ENCODE measurements at regions of chr5 and their contacts with region 1.

Region 1: DNA sequence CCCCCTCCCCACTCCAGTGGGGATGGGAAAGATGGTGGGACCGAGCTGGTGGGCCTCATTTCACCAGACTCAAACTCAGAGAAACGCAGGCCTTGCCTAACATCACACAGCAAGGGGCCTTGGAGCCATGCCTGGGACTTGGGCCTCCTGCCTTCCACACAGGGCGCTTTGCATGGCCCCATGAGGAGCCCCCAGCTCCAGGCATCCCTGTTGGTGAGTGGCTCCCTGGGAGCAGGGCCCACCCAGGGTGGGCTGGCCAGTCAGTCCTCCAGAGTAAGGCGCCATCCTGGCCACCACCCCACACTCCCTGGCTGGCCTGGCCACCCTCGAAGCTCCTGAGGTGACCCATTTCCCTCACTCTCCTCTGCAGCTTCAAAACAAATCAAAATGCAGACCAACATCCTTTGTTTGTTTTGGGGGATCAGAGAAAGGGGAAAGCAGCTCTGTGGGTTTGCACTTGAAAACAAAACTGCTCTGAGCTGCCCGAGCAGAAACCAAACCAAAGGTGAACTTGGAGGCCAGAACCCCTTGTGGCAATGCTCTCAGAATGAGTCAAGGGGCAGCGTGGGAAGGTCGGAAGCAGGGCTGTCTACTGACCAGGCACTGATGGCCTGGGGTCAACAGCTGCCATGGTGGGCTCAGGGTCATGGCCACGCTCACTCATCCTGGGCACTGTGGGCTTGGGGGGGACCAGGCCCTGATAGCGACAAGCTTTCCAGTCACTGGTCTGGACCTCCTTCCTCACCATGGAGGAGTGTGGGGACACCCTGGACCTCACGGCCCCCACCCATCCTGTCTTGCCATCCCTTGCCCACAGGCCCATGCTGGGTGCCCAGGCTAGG is 37.0 kb upstream of the VDAC1 start:
- DNase-seq: peak in 1 of 14 experiments; percentile 10
- ATAC-seq: no peak
- H3K4me3 ChIP-seq: no peak overlapping the region
- H3K4me3 Mint-ChIP-seq: peak overlapping the region; percentile 30
- H3K27ac ChIP-seq: peak overlapping the region in 1 of 2 donors; percentile 36
- H3K27ac Mint-ChIP-seq: peak overlapping the region; percentile 47
- H3K4me1 ChIP-seq: peaks cover 60% of the 10 kb centered on the region
- H3K4me1 Mint-ChIP-seq: peaks cover 78% of the 10 kb centered on the region
- H3K27me3 ChIP-seq: no peaks in the 10 kb centered on the region
- H3K27me3 Mint-ChIP-seq: no peaks in the 10 kb centered on the region
- CTCF ChIP-seq: no peak

Region 2: DNA sequence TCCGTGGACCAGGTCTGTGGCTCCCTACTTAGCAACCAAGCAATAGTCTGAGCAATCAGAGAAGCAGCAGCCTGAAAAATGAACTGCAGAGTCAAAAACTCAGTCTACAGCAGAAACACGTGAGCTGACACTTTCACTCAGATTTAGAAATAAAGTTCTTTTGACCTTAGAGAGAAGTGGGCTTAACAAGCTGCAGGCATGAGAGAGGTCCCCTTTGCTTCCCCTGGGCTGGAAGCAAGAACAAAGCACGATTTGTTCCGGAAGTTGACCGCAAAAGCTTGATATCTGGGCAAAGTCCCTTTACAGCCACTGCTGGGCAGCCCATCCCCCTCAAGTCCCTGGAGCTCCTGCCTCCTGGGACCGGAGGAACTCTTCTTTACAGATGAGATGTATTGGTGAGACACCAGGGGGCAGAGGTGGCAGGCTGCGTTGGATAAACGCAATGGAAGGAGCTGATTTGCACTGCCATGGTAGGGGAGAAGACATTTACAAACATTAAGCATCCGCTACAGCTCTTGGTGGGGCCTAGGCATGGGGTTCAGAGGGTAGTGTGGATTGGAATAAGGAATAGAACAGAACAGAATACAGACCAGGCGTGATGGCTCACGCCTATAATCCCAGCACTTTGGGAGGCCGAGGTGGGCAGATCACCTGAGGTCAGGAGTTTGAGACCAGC is 1234.5 kb before region 1 on chr5:
- CTCF ChIA-PET with region 1: no interaction called
- POLR2A ChIA-PET with region 1: no interaction called
- intact Hi-C with region 1: no loop called
- DNase-seq: no peak
- ATAC-seq: no peak
- H3K4me3 ChIP-seq: no peak overlapping the region
- H3K4me3 Mint-ChIP-seq: no peak overlapping the region
- H3K27ac ChIP-seq: no peak overlapping the region
- H3K27ac Mint-ChIP-seq: no peak overlapping the region
- H3K4me1 ChIP-seq: peaks cover 3% of the 10 kb centered on the region
- H3K4me1 Mint-ChIP-seq: peaks cover 8% of the 10 kb centered on the region
- H3K27me3 ChIP-seq: peaks cover 18 to 35% of the 10 kb centered on the region in 2 experiments
- H3K27me3 Mint-ChIP-seq: peaks cover 89% of the 10 kb centered on the region
- CTCF ChIP-seq: no peak

Region 3: DNA sequence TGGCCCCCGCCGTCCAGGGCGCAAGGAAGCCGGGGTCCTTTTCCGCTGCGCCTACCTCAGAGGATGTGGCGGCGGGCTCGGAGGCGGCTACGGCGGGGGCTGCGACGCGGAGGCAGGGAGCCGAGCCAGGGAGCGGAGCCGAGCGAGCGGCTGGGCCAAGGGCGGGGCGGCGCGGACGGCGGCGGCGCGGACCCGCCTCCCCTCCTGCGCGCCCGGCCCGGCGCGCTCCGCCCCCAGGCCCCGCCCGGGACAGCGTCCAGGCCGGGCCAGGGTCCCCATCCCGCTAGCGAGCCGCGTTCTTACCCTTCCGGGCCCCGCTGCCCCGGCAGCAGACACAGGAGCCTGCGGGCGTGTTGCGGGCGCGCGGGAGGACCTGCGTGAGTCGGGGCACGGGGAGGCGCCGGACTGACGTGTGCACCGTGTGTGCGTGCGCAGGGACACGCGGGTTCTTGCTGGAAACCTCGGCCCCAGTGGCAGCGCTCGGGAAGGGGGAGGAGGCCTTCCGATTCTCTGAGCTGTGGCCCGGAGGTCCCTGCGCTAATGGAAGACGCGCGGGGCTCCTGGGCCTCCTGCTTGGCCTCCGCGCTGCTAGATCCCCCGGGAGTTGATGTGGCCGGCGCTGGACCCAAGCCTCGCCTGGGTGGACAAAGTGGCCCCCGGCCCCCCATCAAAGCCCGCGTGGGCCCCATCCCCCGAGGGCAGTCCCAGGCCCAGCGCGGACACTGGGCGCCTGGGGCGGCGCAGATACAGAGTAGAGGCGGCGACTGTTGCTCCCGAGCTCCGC is 37.0 kb before region 1 on chr5 and contains the start of gene VDAC1:
- CTCF ChIA-PET with region 1: interaction called, 11 read pairs
- POLR2A ChIA-PET with region 1: interaction called, 7 read pairs
- intact Hi-C with region 1: no loop called
- DNase-seq: peak; percentile 69 to 97 (median 80)
- ATAC-seq: peak; percentile 82
- H3K4me3 ChIP-seq: peak within 1 kb of the TSS; percentile 85
- H3K4me3 Mint-ChIP-seq: peak within 1 kb of the TSS; percentile 99
- H3K27ac ChIP-seq: peak within 1 kb of the TSS; percentile 77 to 91
- H3K27ac Mint-ChIP-seq: peak within 1 kb of the TSS; percentile 97
- H3K4me1 ChIP-seq: peaks cover 54% of the 10 kb centered on the region
- H3K4me1 Mint-ChIP-seq: peaks cover 48% of the 10 kb centered on the region
- H3K27me3 ChIP-seq: no peaks in the 10 kb centered on the region
- H3K27me3 Mint-ChIP-seq: no peaks in the 10 kb centered on the region
- CTCF ChIP-seq: no peak
- total RNA-seq, gene VDAC1: 46.8 to 50.9 TPM

Region 4: DNA sequence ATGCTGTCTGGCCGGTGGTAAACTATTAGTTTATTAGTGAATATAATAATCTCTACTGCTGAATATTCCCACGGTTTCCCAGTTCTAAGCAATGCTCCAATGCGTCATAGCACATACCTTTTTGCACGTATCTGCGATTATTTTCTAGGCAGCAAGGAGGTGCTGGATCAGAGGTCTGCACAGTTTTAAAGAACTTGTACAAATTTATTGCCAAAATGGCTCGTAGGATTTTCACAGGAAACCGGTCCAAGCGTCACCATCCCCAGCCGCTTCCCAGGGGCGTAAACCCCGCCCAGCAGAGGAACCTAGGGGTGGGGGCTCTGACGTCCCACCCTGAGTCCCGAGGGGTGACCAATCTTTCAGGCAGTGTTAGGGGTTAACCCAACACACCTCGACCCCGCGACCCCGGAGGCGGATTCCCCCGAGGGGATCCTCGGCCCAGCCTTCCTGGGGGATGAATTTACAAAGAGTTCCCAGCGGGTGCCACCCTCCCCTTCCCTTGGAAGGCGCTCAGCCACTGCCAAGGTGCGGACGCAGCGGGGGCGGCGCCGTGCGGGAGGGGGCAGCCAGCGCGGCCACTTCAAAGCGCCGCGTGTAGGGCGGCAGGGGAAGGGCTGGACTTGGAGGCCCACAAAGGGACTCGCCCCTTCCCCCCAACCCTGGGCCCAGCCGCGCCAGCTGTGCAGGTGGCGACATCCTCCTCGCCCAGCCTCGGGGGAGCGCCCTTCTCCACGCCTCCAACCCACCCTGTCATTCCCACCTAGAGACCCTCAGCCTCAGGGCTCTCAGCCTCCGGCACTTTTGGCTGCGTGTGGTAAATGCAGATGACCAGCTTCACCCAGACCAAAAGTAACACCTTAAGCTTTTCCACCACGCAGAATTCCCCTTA is 29.2 kb after region 1 on chr5:
- CTCF ChIA-PET with region 1: interaction called, 31 read pairs
- POLR2A ChIA-PET with region 1: interaction called, 18 read pairs
- intact Hi-C with region 1: loop called in 1 of 2 experiments (anchors 5 kb)
- DNase-seq: peak in 10 of 14 experiments; percentile 18 to 63 (median 46)
- ATAC-seq: peak; percentile 60
- H3K4me3 ChIP-seq: peak overlapping the region; percentile 61
- H3K4me3 Mint-ChIP-seq: peak overlapping the region; percentile 89
- H3K27ac ChIP-seq: peak overlapping the region in 1 of 2 donors; percentile 60
- H3K27ac Mint-ChIP-seq: peak overlapping the region; percentile 81
- H3K4me1 ChIP-seq: peaks cover 64% of the 10 kb centered on the region
- H3K4me1 Mint-ChIP-seq: peaks cover 74% of the 10 kb centered on the region
- H3K27me3 ChIP-seq: no peaks in the 10 kb centered on the region
- H3K27me3 Mint-ChIP-seq: no peaks in the 10 kb centered on the region
- CTCF ChIP-seq: peak; percentile 30

Region 5: GRCh38 chr5:134101686-134102439 is 60.1 kb after region 1 on chr5:
- CTCF ChIA-PET with region 1: interaction called, 66 read pairs
- POLR2A ChIA-PET with region 1: interaction called, 3 read pairs
- intact Hi-C with region 1: loop called in 1 of 2 experiments (anchors 2 kb)
- DNase-seq: peak; percentile 59 to 84 (median 73)
- ATAC-seq: peak; percentile 28
- H3K4me3 ChIP-seq: no peak overlapping the region
- H3K4me3 Mint-ChIP-seq: no peak overlapping the region
- H3K27ac ChIP-seq: peak overlapping the region; percentile 56 to 97
- H3K27ac Mint-ChIP-seq: peak overlapping the region; percentile 94
- H3K4me1 ChIP-seq: peaks cover 98% of the 10 kb centered on the region
- H3K4me1 Mint-ChIP-seq: peaks cover 94% of the 10 kb centered on the region
- H3K27me3 ChIP-seq: no peaks in the 10 kb centered on the region
- H3K27me3 Mint-ChIP-seq: no peaks in the 10 kb centered on the region
- CTCF ChIP-seq: peak; percentile 92

Region 6: GRCh38 chr5:134125039-134126015 is 83.5 kb after region 1 on chr5:
- CTCF ChIA-PET with region 1: interaction called, 51 read pairs
- POLR2A ChIA-PET with region 1: interaction called, 138 read pairs
- intact Hi-C with region 1: no loop called
- DNase-seq: peak in 1 of 14 experiments; percentile 57
- ATAC-seq: no peak
- H3K4me3 ChIP-seq: peak overlapping the region; percentile 92
- H3K4me3 Mint-ChIP-seq: peak overlapping the region; percentile 95
- H3K27ac ChIP-seq: peak overlapping the region; percentile 75 to 96
- H3K27ac Mint-ChIP-seq: peak overlapping the region; percentile 98
- H3K4me1 ChIP-seq: peaks cover 100% of the 10 kb centered on the region
- H3K4me1 Mint-ChIP-seq: peaks cover 98% of the 10 kb centered on the region
- H3K27me3 ChIP-seq: no peaks in the 10 kb centered on the region
- H3K27me3 Mint-ChIP-seq: no peaks in the 10 kb centered on the region
- CTCF ChIP-seq: no peak

Region 7: GRCh38 chr5:134145779-134146581 is 104.2 kb after region 1 on chr5:
- CTCF ChIA-PET with region 1: interaction called, 114 read pairs
- POLR2A ChIA-PET with region 1: interaction called, 350 read pairs
- intact Hi-C with region 1: loop called (anchors 1 kb)
- DNase-seq: peak; percentile 73 to 89 (median 84)
- ATAC-seq: peak; percentile 71
- H3K4me3 ChIP-seq: no peak overlapping the region
- H3K4me3 Mint-ChIP-seq: peak overlapping the region; percentile 46
- H3K27ac ChIP-seq: peak overlapping the region in 1 of 2 donors; percentile 48
- H3K27ac Mint-ChIP-seq: peak overlapping the region; percentile 98
- H3K4me1 ChIP-seq: peaks cover 50% of the 10 kb centered on the region
- H3K4me1 Mint-ChIP-seq: peaks cover 64% of the 10 kb centered on the region
- H3K27me3 ChIP-seq: no peaks in the 10 kb centered on the region
- H3K27me3 Mint-ChIP-seq: no peaks in the 10 kb centered on the region
- CTCF ChIP-seq: peak; percentile 95

Measured in CD4-positive, alpha-beta T cell (primary cell).